ENCODE measurements at regions of chr6 and their contacts with region 1.

Region 1: GRCh38 chr6:143750877-143751276 is 73.1 kb downstream of the PHACTR2 start:
- DNase-seq: no peak
- ATAC-seq: no peak
- H3K4me3 Mint-ChIP-seq: no peak overlapping the region
- H3K27ac Mint-ChIP-seq: no peak overlapping the region
- H3K4me1 Mint-ChIP-seq: no peaks in the 10 kb centered on the region
- H3K27me3 Mint-ChIP-seq: no peaks in the 10 kb centered on the region
- CTCF ChIP-seq: no peak

Region 2: GRCh38 chr6:143708889-143709288 is 42.0 kb before region 1 on chr6:
- CTCF ChIA-PET with region 1: no interaction called
- POLR2A ChIA-PET with region 1: no interaction called
- intact Hi-C with region 1: no loop called
- DNase-seq: no peak
- ATAC-seq: no peak
- H3K4me3 Mint-ChIP-seq: no peak overlapping the region
- H3K27ac Mint-ChIP-seq: no peak overlapping the region
- H3K4me1 Mint-ChIP-seq: peaks cover 9% of the 10 kb centered on the region
- H3K27me3 Mint-ChIP-seq: peaks cover 2% of the 10 kb centered on the region
- CTCF ChIP-seq: no peak

Region 3: DNA sequence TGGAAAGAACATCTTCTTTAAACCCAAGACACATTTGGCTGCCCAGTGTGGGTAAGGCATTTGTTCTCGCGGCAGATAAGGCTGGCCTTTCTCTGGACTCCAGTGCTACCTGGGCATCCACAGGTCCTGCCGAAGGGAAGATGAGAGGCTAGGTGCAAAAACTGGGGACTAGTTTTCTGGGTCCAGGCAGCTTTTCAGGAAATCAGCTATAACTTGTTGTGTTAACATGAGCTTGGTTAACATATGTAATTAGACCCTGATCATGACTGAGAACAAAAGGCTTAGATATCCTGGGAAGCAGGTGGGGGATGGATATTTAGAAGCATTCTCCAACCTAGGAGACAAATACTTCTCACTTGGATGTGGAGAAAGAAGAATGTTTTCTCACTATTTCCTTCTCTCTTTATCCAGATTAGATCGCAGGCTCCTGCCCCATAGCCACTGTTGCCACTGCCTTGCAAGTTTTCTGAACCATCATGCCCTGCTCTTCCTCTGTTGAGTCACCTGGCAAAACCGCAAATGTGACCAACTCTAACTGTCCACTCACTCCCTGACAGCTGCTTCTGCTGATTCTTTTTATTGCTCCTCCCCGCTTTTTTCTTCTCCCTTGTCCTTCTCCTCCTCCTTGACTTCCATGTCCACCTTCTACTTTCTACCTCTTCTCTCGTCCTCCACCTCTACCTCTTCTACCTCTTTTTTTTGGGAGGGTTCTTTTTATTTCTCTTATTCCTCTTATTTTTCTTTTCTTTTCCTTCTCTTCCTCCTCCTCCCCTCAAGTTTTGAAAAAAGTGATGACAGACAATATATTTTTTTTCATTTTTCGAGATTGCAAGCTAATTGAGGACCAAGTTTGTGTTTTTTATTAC is 792.4 kb after region 1 on chr6:
- CTCF ChIA-PET with region 1: no interaction called
- POLR2A ChIA-PET with region 1: interaction called, 10 read pairs
- intact Hi-C with region 1: no loop called
- DNase-seq: no peak
- ATAC-seq: no peak
- H3K4me3 Mint-ChIP-seq: no peak overlapping the region
- H3K27ac Mint-ChIP-seq: no peak overlapping the region
- H3K4me1 Mint-ChIP-seq: no peaks in the 10 kb centered on the region
- H3K27me3 Mint-ChIP-seq: no peaks in the 10 kb centered on the region
- CTCF ChIP-seq: no peak

Measured in activated B cell treated with CpG ODN at 0.5 μM for 24 hours (primary cell).